Activated CD8-positive, alpha-beta T cell treated with anti-CD3 and anti-CD28 coated beads, Interleukin-2, amount 10 ng/mL, durations not matched to agents 7 days and 5 days (primary cell): ENCODE measurements at regions of chr11 and their contacts with region 1.

Region 1: GRCh38 chr11:122749005-122749687 is 89.2 kb upstream of the CRTAM start:
- DNase-seq: peak; percentile 80
- ATAC-seq: peak; percentile 72
- H3K4me3 Mint-ChIP-seq: peak overlapping the region; percentile 24
- H3K27ac Mint-ChIP-seq: peak overlapping the region; percentile 69
- H3K4me1 Mint-ChIP-seq: peaks cover 39% of the 10 kb centered on the region
- H3K27me3 Mint-ChIP-seq: peaks cover 2% of the 10 kb centered on the region

Region 2: DNA sequence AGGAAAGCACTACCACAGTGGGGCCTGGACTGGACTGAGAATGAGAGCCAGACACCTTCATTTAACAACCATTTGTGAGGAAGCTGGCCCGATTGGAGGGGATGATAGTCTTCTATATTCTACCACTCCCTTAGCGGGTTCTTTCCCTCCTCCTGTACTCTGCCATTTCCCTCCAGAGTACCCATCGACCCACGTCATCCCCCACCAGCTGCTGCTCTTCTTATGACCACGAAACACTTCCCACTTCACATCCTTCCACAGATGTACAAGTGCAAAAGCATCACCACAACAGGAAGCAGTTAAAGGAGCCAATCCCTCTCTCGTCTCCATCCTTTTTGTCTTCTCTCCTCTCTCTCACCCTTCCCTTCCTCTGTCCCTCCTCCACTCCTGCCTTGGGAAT is 111.6 kb before region 1 on chr11:
- CTCF ChIA-PET with region 1: interaction called, 441 read pairs
- POLR2A ChIA-PET with region 1: no interaction called
- DNase-seq: peak; percentile 52
- ATAC-seq: peak; percentile 73
- H3K4me3 Mint-ChIP-seq: no peak overlapping the region
- H3K27ac Mint-ChIP-seq: peak overlapping the region; percentile 56
- H3K4me1 Mint-ChIP-seq: peaks cover 34% of the 10 kb centered on the region
- H3K27me3 Mint-ChIP-seq: no peaks in the 10 kb centered on the region

Region 3: GRCh38 chr11:122711831-122712381 is 37.2 kb before region 1 on chr11:
- CTCF ChIA-PET with region 1: interaction called, 65 read pairs
- POLR2A ChIA-PET with region 1: interaction called, 16 read pairs
- DNase-seq: no peak
- ATAC-seq: no peak
- H3K4me3 Mint-ChIP-seq: no peak overlapping the region
- H3K27ac Mint-ChIP-seq: no peak overlapping the region
- H3K4me1 Mint-ChIP-seq: peaks cover 79% of the 10 kb centered on the region
- H3K27me3 Mint-ChIP-seq: no peaks in the 10 kb centered on the region

Region 4: DNA sequence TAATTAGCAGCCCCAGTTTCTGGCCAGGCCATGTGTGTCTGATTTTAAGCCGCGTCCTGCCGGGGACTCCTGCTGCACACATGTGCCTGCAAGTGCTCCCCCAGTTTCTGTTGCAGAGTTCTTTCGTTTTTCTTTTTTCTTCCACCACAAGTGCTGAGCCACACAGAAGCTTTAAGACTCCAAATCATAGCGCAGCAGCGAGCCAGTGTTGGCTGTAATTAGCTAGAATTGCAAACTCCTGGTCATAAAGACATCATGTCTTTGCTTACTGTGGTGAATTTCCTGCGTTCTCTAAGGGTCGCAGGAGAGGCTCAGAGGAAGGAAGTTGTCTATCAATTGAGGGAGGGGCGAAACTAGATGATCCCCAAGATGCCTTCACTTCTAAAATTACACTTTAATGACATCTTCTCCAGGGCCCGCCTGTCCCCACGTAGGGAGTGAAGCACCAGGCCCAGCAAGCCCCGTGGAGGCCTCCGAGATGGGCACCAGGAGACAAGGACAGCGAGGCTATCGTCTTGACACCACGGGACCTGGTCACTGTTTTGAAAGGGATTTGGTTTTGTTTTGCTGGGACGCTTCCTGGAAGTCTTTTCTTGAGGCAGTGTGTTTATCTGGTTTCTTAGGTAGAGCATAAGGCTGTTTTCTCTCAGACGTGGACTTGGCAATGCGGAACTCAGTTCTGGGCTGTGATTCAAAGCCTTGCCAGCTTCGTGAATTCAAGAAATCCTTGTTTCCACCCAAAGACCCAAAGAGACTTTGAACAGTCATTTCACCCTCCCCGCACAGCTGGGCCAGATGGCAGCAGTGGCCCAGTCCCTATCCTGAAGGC is 21.8 kb before region 1 on chr11:
- CTCF ChIA-PET with region 1: interaction called, 69 read pairs
- POLR2A ChIA-PET with region 1: interaction called, 31 read pairs
- DNase-seq: peak; percentile 70
- ATAC-seq: peak; percentile 69
- H3K4me3 Mint-ChIP-seq: peak overlapping the region; percentile 68
- H3K27ac Mint-ChIP-seq: peak overlapping the region; percentile 96
- H3K4me1 Mint-ChIP-seq: peaks cover 73% of the 10 kb centered on the region
- H3K27me3 Mint-ChIP-seq: no peaks in the 10 kb centered on the region

Region 5: GRCh38 chr11:123301696-123302400 is 552.7 kb after region 1 on chr11:
- CTCF ChIA-PET with region 1: no interaction called
- POLR2A ChIA-PET with region 1: no interaction called
- DNase-seq: peak; percentile 77
- ATAC-seq: peak; percentile 96
- H3K4me3 Mint-ChIP-seq: peak overlapping the region; percentile 44
- H3K27ac Mint-ChIP-seq: no peak overlapping the region
- H3K4me1 Mint-ChIP-seq: peaks cover 41% of the 10 kb centered on the region
- H3K27me3 Mint-ChIP-seq: peaks cover 3% of the 10 kb centered on the region